ENCODE measurements at regions of chr2 and their contacts with region 1.

Region 1: GRCh38 chr2:25201265-25201664 is 32.9 kb upstream of the POMC start:
- DNase-seq: no peak
- H3K4me3 ChIP-seq: no peak overlapping the region
- H3K27ac ChIP-seq: no peak overlapping the region
- H3K4me1 ChIP-seq: no peaks in the 10 kb centered on the region
- H3K27me3 ChIP-seq: no peaks in the 10 kb centered on the region
- CTCF ChIP-seq: no peak
- POLR2A ChIP-seq: no peak

Region 2: GRCh38 chr2:24065341-24065740 is 1135.9 kb before region 1 on chr2:
- intact Hi-C with region 1: no loop called
- DNase-seq: no peak
- H3K4me3 ChIP-seq: no peak overlapping the region
- H3K27ac ChIP-seq: no peak overlapping the region
- H3K4me1 ChIP-seq: no peaks in the 10 kb centered on the region
- H3K27me3 ChIP-seq: no peaks in the 10 kb centered on the region
- CTCF ChIP-seq: no peak
- POLR2A ChIP-seq: no peak

Region 3: DNA sequence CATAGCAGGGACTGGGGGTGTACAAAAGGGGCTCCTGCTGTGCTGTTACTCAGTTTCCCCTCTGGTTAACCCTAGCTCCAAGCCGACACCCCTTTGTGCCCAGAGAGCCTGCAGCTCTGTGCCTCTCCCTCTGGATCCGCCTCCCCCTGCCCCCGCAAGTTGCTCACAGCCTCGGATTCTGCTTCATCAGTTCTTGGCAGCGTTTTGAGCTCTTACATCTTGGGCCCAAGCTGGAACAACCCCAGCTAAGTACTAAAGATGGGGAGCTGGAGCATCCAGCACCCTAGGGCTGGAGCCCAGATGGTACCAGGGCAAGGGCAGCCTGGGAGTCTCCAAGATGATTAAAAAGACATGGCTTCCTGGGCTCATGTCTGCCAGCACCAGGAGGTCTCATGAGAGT is 73.6 kb before region 1 on chr2:
- intact Hi-C with region 1: loop called (anchors 2 kb)
- DNase-seq: no peak
- H3K4me3 ChIP-seq: no peak overlapping the region
- H3K27ac ChIP-seq: no peak overlapping the region
- H3K4me1 ChIP-seq: no peaks in the 10 kb centered on the region
- H3K27me3 ChIP-seq: peaks cover 0 to 5% of the 10 kb centered on the region in 2 donors
- CTCF ChIP-seq: no peak
- POLR2A ChIP-seq: no peak

Region 4: GRCh38 chr2:25237764-25238163 is 36.5 kb after region 1 on chr2:
- intact Hi-C with region 1: loop called (anchors 2 kb)
- DNase-seq: no peak
- H3K4me3 ChIP-seq: no peak overlapping the region
- H3K27ac ChIP-seq: no peak overlapping the region
- H3K4me1 ChIP-seq: no peaks in the 10 kb centered on the region
- H3K27me3 ChIP-seq: no peaks in the 10 kb centered on the region
- CTCF ChIP-seq: no peak
- POLR2A ChIP-seq: no peak